Activated B cell treated with CpG ODN at 0.5 μM for 24 hours (primary cell): ENCODE measurements at regions of chr1 and their contacts with region 1.

Region 1: GRCh38 chr1:110370827-110371226 is 20.0 kb downstream of the SLC16A4 start:
- DNase-seq: no peak
- ATAC-seq: no peak
- H3K4me3 Mint-ChIP-seq: no peak overlapping the region
- H3K27ac Mint-ChIP-seq: no peak overlapping the region
- H3K4me1 Mint-ChIP-seq: peaks cover 7% of the 10 kb centered on the region
- H3K27me3 Mint-ChIP-seq: no peaks in the 10 kb centered on the region
- CTCF ChIP-seq: no peak

Region 2: GRCh38 chr1:110319332-110320152 is 51.3 kb before region 1 on chr1:
- CTCF ChIA-PET with region 1: no interaction called
- POLR2A ChIA-PET with region 1: no interaction called
- intact Hi-C with region 1: no loop called
- DNase-seq: no peak
- ATAC-seq: no peak
- H3K4me3 Mint-ChIP-seq: no peak overlapping the region
- H3K27ac Mint-ChIP-seq: no peak overlapping the region
- H3K4me1 Mint-ChIP-seq: no peaks in the 10 kb centered on the region
- H3K27me3 Mint-ChIP-seq: no peaks in the 10 kb centered on the region
- CTCF ChIP-seq: no peak

Region 3: DNA sequence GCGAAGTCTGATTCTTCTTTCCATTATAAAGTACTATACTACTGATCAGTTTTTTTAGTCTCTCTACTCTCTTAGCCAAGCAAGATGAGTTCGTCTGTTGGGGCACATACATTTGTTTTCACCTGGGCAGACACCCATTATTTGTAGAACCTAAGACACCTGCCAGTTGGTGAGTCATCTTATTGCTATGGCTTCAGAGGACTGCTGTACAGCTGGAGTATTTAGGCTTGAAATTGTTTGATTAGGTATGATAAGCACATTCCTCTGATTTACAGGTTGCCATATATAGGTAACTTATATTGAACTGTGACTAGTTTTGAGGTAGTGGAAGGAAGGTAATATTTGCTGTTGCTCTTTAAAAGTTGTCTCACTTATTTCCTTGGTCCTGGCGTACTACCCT is 14.4 kb before region 1 on chr1:
- CTCF ChIA-PET with region 1: interaction called, 3 read pairs
- POLR2A ChIA-PET with region 1: no interaction called
- intact Hi-C with region 1: loop called (anchors 2 kb)
- DNase-seq: no peak
- ATAC-seq: no peak
- H3K4me3 Mint-ChIP-seq: no peak overlapping the region
- H3K27ac Mint-ChIP-seq: no peak overlapping the region
- H3K4me1 Mint-ChIP-seq: peaks cover 18% of the 10 kb centered on the region
- H3K27me3 Mint-ChIP-seq: no peaks in the 10 kb centered on the region
- CTCF ChIP-seq: no peak

Region 4: DNA sequence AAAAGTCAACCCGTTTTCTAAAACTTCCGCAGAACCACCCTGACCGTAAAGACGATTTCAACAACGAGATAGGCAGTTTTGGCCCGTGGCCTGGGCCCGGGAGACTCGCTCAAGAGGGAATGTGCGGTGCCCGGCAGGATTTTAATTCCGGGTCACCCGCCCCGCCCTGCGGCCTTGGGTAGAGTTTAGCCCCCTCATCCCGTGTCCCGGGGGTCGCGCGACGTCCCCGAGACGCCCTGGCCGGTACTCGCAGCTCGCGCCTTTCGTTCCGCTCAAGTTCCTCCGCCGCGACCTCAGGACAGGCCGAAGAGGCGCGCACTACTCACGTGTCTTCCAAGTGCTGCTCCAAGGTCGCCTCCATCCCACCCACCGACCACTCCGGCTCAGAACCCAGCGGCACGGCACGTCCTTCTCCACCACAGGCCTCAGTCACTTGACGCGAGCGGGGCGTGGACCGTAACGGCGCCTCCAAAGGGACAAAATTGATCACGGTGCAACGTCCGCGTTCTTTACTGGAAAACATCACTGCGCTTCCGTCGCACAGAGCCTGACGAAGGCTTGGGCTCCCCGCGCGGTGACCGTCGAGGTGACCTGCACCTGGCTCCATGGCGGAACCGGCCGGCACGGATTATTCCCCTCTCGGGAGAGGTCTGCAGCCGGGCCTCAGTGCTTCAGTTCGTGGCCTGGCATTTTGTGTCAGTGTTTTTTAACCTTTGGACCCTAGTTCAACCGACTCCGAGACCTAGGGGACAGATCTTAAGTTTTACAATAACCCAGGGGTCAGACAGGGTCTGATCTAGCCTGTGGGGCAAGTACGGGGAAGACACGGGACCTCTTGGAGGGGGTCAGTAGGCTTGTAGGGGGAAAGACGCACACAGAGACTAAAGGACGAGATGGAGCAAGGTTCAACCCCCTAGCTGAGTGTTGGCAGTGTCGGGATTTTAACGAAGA is 36.7 kb after region 1 on chr1 and contains the start of gene LAMTOR5:
- CTCF ChIA-PET with region 1: no interaction called
- POLR2A ChIA-PET with region 1: interaction called, 3 read pairs
- intact Hi-C with region 1: loop called (anchors 5 kb)
- DNase-seq: peak; percentile 84
- ATAC-seq: peak; percentile 91
- H3K4me3 Mint-ChIP-seq: peak within 1 kb of the TSS; percentile 97
- H3K27ac Mint-ChIP-seq: peak within 1 kb of the TSS; percentile 96
- H3K4me1 Mint-ChIP-seq: peaks cover 26% of the 10 kb centered on the region
- H3K27me3 Mint-ChIP-seq: no peaks in the 10 kb centered on the region
- CTCF ChIP-seq: no peak
- total RNA-seq, gene LAMTOR5: 160 and 172 TPM in 2 replicates